Activated CD4-positive, alpha-beta T cell treated with anti-CD3 and anti-CD28 coated beads, Interleukin-2, amount 10 ng/mL, durations not matched to agents 7 days and 5 days (primary cell): ENCODE measurements at regions of chr11 and their contacts with region 1.

Region 1: GRCh38 chr11:2532704-2533586 is 88.1 kb downstream of the KCNQ1 start:
- DNase-seq: peak; percentile 93
- H3K4me3 Mint-ChIP-seq: peak overlapping the region; percentile 54
- H3K27ac Mint-ChIP-seq: peak overlapping the region; percentile 81
- H3K4me1 Mint-ChIP-seq: peaks cover 23% of the 10 kb centered on the region
- H3K27me3 Mint-ChIP-seq: no peaks in the 10 kb centered on the region

Region 2: GRCh38 chr11:2305140-2305840 is 227.7 kb before region 1 on chr11:
- CTCF ChIA-PET with region 1: interaction called, 12 read pairs
- POLR2A ChIA-PET with region 1: no interaction called
- DNase-seq: peak; percentile 71
- H3K4me3 Mint-ChIP-seq: peak overlapping the region; percentile 96
- H3K27ac Mint-ChIP-seq: peak overlapping the region; percentile 96
- H3K4me1 Mint-ChIP-seq: peaks cover 47% of the 10 kb centered on the region
- H3K27me3 Mint-ChIP-seq: no peaks in the 10 kb centered on the region

Region 3: GRCh38 chr11:2877474-2877873 is 344.5 kb after region 1 on chr11:
- CTCF ChIA-PET with region 1: interaction called, 10 read pairs
- POLR2A ChIA-PET with region 1: no interaction called
- DNase-seq: no peak
- H3K4me3 Mint-ChIP-seq: no peak overlapping the region
- H3K27ac Mint-ChIP-seq: no peak overlapping the region
- H3K4me1 Mint-ChIP-seq: no peaks in the 10 kb centered on the region
- H3K27me3 Mint-ChIP-seq: peaks cover 6% of the 10 kb centered on the region

Region 4: GRCh38 chr11:2885676-2886081 is 352.7 kb after region 1 on chr11 and contains the start of gene CDKN1C:
- CTCF ChIA-PET with region 1: interaction called, 230 read pairs
- POLR2A ChIA-PET with region 1: no interaction called
- DNase-seq: peak; percentile 81
- H3K4me3 Mint-ChIP-seq: peak within 1 kb of the TSS; percentile 86
- H3K27ac Mint-ChIP-seq: no peak within 1 kb of the TSS
- H3K4me1 Mint-ChIP-seq: peaks cover 14% of the 10 kb centered on the region
- H3K27me3 Mint-ChIP-seq: peaks cover 29% of the 10 kb centered on the region
- total RNA-seq, gene CDKN1C: 0.29 to 0.40 TPM

Region 5: DNA sequence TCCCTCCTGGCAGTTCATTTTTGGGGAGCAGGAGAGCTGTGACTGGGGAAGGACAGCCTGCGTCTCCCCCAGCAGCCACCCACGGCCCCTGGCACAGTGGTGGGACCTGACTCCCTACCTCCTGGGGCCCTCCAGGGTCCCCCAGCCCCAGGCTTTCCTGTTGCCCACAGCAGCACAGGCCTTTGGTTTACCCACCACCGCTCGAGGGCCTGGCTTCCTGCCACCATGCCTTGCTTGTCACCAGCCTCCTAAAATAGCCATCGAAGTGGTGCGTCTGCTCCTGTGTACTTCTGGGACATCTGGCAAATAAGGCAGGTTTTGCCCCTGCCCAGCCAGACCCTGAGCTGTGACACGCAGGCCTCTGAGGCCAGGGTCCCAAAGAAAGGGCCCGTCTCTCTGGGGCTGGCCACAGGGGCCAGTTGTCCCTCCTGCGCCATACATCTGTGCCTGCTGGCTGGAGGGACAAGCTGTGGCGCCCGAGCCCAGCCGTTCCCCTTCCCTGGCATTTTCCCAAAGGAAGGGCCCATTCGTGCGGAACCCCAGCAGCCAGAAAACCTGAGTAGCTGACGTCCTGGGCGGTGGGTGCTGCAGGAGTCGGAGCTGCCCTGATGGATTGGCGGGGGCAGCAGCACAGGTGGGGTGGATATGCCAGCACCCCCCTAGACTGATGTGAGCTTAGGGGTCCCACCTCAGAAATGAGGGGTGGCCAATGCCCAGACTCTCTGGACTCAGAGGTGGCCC is 381.7 kb after region 1 on chr11:
- CTCF ChIA-PET with region 1: interaction called, 10 read pairs
- POLR2A ChIA-PET with region 1: no interaction called
- DNase-seq: no peak
- H3K4me3 Mint-ChIP-seq: no peak overlapping the region
- H3K27ac Mint-ChIP-seq: no peak overlapping the region
- H3K4me1 Mint-ChIP-seq: peaks cover 8% of the 10 kb centered on the region
- H3K27me3 Mint-ChIP-seq: no peaks in the 10 kb centered on the region

Region 6: GRCh38 chr11:3091791-3092602 is 559.1 kb after region 1 on chr11:
- CTCF ChIA-PET with region 1: interaction called, 31 read pairs
- POLR2A ChIA-PET with region 1: no interaction called
- DNase-seq: peak; percentile 76
- H3K4me3 Mint-ChIP-seq: no peak overlapping the region
- H3K27ac Mint-ChIP-seq: no peak overlapping the region
- H3K4me1 Mint-ChIP-seq: peaks cover 7% of the 10 kb centered on the region
- H3K27me3 Mint-ChIP-seq: no peaks in the 10 kb centered on the region